ENCODE measurements at regions of chr1 and their contacts with region 1.

Region 1: DNA sequence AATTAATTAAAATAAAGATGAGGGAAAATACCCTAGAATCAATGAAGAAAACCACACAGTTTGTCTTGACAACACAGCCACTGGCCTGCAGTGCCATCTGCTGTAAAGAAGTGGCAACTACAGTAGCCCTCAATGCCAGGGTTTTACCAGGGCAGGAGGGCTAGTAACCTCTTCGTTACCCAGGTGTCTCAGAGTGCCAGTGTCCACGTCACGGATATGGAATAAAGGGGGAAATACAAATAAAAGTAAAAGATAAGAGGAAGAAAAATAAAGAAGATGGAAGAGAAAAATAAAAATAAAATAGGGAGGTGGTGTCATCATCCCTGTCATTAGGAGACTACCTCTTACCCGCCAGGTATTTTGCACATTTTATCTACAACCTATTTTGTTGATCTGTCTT is 14.2 kb upstream of the SLC44A3 start:
- DNase-seq: no peak
- H3K4me3 ChIP-seq: peak overlapping the region in 1 of 4 donors; percentile 5
- H3K27ac ChIP-seq: no peak overlapping the region
- H3K4me1 ChIP-seq: peaks cover 0 to 31% (median 30%) of the 10 kb centered on the region in 4 donors
- H3K27me3 ChIP-seq: no peaks in the 10 kb centered on the region
- CTCF ChIP-seq: peak; percentile 97 to 99 (median 98)
- EP300 ChIP-seq: no peak
- POLR2A ChIP-seq: no peak

Region 2: GRCh38 chr1:94417978-94418663 is 387.8 kb before region 1 on chr1 and contains the start of gene ABCD3:
- intact Hi-C with region 1: loop called (anchors 10 kb)
- DNase-seq: peak; percentile 99
- H3K4me3 ChIP-seq: peak within 1 kb of the TSS; percentile 89 to 97 (median 96)
- H3K27ac ChIP-seq: peak within 1 kb of the TSS; percentile 92 to 96 (median 94)
- H3K4me1 ChIP-seq: peaks cover 0 to 40% (median 32%) of the 10 kb centered on the region in 4 donors
- H3K27me3 ChIP-seq: no peaks in the 10 kb centered on the region
- CTCF ChIP-seq: no peak
- EP300 ChIP-seq: peak in 1 of 4 donors; percentile 22
- POLR2A ChIP-seq: peak; percentile 74 to 79
- total RNA-seq, gene ABCD3: 22.8 to 55.6 (median 31.7) TPM

Region 3: GRCh38 chr1:94481473-94481933 is 324.4 kb before region 1 on chr1:
- intact Hi-C with region 1: loop called (anchors 1 kb)
- DNase-seq: peak; percentile 62
- H3K4me3 ChIP-seq: no peak overlapping the region
- H3K27ac ChIP-seq: no peak overlapping the region
- H3K4me1 ChIP-seq: no peaks in the 10 kb centered on the region
- H3K27me3 ChIP-seq: no peaks in the 10 kb centered on the region
- CTCF ChIP-seq: peak; percentile 54 to 81 (median 62)
- EP300 ChIP-seq: no peak
- POLR2A ChIP-seq: no peak

Region 4: GRCh38 chr1:94522304-94522703 is 283.6 kb before region 1 on chr1:
- intact Hi-C with region 1: loop called (anchors 2 kb)
- DNase-seq: no peak
- H3K4me3 ChIP-seq: no peak overlapping the region
- H3K27ac ChIP-seq: no peak overlapping the region
- H3K4me1 ChIP-seq: peaks cover 0 to under 1% (median 0%) of the 10 kb centered on the region in 4 donors
- H3K27me3 ChIP-seq: no peaks in the 10 kb centered on the region
- CTCF ChIP-seq: peak in 3 of 4 experiments; percentile 38 to 57 (median 39)
- EP300 ChIP-seq: no peak
- POLR2A ChIP-seq: no peak

Region 5: GRCh38 chr1:94541175-94542087 is 264.5 kb before region 1 on chr1 and contains the start of gene F3:
- intact Hi-C with region 1: loop called (anchors 5 kb)
- DNase-seq: peak; percentile 96
- H3K4me3 ChIP-seq: peak within 1 kb of the TSS; percentile 73 to 80 (median 76)
- H3K27ac ChIP-seq: peak within 1 kb of the TSS; percentile 85 to 89 (median 88)
- H3K4me1 ChIP-seq: peaks cover 0 to 35% (median 13%) of the 10 kb centered on the region in 4 donors
- H3K27me3 ChIP-seq: no peaks in the 10 kb centered on the region
- CTCF ChIP-seq: no peak
- EP300 ChIP-seq: no peak
- POLR2A ChIP-seq: peak; percentile 90 to 91
- total RNA-seq, gene F3: 19.3 to 53.7 (median 19.3) TPM

Region 6: DNA sequence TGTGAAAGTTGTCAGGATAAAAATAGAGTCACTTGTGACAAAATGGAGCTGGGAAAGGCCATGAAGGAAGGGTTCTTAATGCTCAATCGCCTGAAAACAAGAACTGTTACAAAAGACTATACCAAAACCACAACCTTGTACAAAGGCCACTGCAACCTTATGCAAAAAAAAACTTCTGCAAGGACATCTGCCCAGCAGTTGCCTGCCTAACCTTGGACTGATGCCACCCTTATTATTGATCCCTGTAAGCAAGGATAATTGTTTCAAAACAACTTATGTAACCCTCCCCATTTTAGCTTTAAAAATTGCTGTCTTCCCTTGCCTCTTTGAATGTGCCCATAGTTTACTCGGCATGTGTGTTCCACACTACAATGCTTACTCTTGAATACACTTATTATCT is 261.1 kb after region 1 on chr1:
- intact Hi-C with region 1: no loop called
- DNase-seq: no peak
- H3K4me3 ChIP-seq: no peak overlapping the region
- H3K27ac ChIP-seq: no peak overlapping the region
- H3K4me1 ChIP-seq: peaks cover 0 to 7% (median 6%) of the 10 kb centered on the region in 4 donors
- H3K27me3 ChIP-seq: no peaks in the 10 kb centered on the region
- CTCF ChIP-seq: no peak
- EP300 ChIP-seq: no peak
- POLR2A ChIP-seq: no peak